ENCODE measurements at regions of chr9 and their contacts with region 1.

Region 1: DNA sequence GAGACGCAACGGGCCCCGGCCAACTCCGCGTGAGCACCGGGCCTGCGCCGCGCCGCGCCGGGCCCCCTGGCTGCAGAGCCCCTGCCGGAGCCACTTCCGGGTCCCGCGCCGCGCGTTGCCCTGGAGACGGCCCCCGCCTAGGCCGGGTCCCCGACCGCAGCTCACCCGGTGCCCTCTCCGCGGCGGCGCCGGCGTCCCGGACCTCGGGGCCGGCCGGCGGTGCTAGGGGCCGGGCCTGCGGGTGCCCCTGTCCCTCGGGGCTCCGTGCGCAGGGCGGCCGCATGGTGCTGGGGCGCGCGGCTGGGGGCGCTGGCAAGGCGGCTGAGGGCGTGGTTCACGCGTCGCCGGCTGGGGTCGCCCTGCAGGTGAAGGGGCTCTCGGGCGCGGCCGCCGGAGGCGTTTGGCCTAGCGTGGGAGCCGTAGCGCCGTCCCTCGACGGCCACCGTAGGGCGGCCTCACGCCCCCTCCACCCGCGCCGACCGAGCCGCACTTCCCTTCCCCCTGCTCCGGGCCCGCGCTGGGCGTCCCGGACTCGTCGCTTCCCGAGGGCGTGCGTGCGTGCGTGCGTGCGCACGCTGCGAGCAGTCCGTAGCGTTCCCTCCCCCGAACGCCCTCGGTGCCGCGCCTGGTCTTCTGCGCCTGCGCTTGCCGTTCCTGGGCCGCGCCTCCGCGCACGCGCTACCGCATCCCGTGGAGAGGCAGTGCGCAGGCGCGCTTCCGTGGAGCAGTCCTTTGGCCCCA is at the start of gene TMEM250:
- DNase-seq: peak; percentile 96
- H3K4me3 Mint-ChIP-seq: peak within 1 kb of the TSS; percentile 73
- H3K27ac Mint-ChIP-seq: peak within 1 kb of the TSS; percentile 51
- H3K4me1 Mint-ChIP-seq: no peaks in the 10 kb centered on the region
- H3K27me3 Mint-ChIP-seq: peaks cover under 1% of the 10 kb centered on the region
- CTCF ChIP-seq: no peak
- total RNA-seq, gene TMEM250: 43.2 and 45.4 TPM in 2 replicates

Region 2: DNA sequence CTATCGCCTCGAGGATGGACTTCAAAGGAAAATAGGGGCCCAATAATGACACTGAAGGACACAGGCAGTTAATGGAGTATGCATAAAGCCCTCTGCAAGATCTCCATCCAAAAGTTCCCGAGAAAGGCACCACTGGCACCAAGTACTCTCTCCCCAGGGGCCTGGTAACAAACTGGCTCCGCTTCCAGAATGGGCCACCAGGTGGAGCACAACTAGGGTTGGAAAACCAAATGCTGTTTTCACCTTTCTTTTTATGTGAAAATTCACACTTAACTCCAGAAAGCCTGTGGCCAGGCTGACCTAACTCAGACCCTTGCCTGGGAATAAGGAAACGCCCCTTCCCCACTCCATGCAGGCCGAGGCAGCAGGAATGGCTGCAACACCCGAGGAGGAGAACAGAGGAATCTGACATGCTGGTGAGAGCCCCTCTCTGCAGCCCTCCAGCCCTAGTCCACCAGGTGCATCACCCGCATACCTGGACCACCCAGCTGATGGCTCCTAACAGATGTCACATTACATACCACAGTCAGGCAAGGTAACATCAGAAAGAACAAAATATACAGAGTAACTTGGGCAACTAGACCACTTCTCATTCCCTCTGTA is 253.9 kb before region 1 on chr9:
- CTCF ChIA-PET with region 1: no interaction called
- POLR2A ChIA-PET with region 1: interaction called, 3 read pairs
- intact Hi-C with region 1: loop called (anchors 2 kb)
- DNase-seq: peak; percentile 65
- H3K4me3 Mint-ChIP-seq: no peak overlapping the region
- H3K27ac Mint-ChIP-seq: no peak overlapping the region
- H3K4me1 Mint-ChIP-seq: no peaks in the 10 kb centered on the region
- H3K27me3 Mint-ChIP-seq: no peaks in the 10 kb centered on the region
- CTCF ChIP-seq: peak; percentile 66

Region 3: DNA sequence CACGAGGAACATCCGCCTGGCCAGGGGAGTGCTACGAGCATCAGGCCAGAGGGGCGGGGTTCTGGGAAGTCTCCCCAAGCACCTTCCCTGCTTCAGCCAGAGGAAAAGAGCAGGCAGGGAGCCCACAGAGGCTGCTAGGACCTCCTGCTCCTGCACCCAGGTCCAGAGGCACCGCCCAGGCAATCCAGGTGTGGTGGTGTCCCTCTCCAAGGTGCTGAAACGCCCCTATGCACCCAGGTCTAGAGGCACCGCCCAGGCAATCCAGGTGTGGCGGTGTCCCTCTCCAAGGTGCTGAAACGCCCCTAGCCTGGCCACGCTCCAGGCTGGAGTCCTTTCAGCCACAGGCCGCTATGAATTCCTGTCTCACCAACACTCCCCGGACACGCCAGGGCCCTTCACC is 146.6 kb before region 1 on chr9:
- CTCF ChIA-PET with region 1: interaction called, 104 read pairs
- POLR2A ChIA-PET with region 1: no interaction called
- intact Hi-C with region 1: loop called (anchors 1 kb)
- DNase-seq: peak; percentile 84
- H3K4me3 Mint-ChIP-seq: no peak overlapping the region
- H3K27ac Mint-ChIP-seq: no peak overlapping the region
- H3K4me1 Mint-ChIP-seq: peaks cover 7% of the 10 kb centered on the region
- H3K27me3 Mint-ChIP-seq: peaks cover 31% of the 10 kb centered on the region
- CTCF ChIP-seq: no peak

Region 4: DNA sequence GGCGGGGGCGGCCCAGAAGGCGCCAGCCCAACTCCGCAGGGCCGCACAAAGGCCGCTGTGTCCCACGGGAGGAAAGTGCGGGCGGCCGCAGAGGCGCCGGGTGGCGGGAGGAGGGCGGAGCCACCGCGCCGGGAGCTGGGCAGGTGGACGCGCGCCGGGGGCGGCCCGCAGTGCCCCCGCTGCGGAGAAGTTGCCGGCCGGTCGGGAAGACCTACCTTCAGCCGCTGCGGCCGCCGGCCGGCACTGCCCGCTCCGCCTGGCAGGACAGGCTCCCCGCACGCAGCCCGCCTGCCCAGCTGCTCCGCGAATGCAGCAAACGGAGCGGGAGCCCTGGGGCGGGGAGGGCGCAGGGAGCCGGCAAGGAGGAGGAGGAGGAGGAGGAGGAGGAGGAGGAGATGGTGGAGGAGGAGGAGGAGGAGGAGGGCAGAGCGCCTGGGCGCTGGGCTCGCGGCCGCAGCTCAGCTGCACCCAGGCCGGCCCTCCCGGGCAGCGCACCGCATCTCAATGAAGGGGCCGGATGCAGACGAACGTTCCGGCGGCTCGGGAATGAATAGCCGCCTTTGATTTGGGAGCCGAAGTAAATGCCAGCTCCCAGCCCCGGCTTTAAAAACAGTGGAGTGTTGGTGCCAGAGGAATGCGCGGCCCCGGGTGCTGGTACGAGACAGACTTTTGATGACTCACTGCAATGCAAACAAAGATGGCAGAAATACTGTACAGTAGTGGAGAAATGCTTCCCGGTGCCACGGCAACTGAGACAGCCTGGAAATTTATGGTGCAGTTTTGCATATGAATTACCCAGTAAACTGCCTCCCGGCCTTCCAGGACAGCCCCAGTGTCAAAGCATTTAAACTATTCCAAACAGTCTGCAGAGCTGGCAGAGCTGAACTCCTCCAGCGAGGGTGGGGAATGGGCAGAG is 66.7 kb before region 1 on chr9:
- CTCF ChIA-PET with region 1: interaction called, 5 read pairs
- POLR2A ChIA-PET with region 1: interaction called, 12 read pairs
- intact Hi-C with region 1: no loop called
- DNase-seq: peak; percentile 97
- H3K4me3 Mint-ChIP-seq: peak overlapping the region; percentile 64
- H3K27ac Mint-ChIP-seq: peak overlapping the region; percentile 35
- H3K4me1 Mint-ChIP-seq: peaks cover 6% of the 10 kb centered on the region
- H3K27me3 Mint-ChIP-seq: no peaks in the 10 kb centered on the region
- CTCF ChIP-seq: no peak

Region 5: GRCh38 chr9:136093995-136094881 is 24.3 kb before region 1 on chr9:
- CTCF ChIA-PET with region 1: interaction called, 18 read pairs
- POLR2A ChIA-PET with region 1: interaction called, 28 read pairs
- intact Hi-C with region 1: loop called (anchors 1 kb)
- DNase-seq: peak; percentile 65
- H3K4me3 Mint-ChIP-seq: peak overlapping the region; percentile 77
- H3K27ac Mint-ChIP-seq: peak overlapping the region; percentile 67
- H3K4me1 Mint-ChIP-seq: peaks cover 17% of the 10 kb centered on the region
- H3K27me3 Mint-ChIP-seq: no peaks in the 10 kb centered on the region
- CTCF ChIP-seq: no peak

Region 6: GRCh38 chr9:136145580-136145979 is 27.1 kb after region 1 on chr9:
- CTCF ChIA-PET with region 1: no interaction called
- POLR2A ChIA-PET with region 1: no interaction called
- intact Hi-C with region 1: no loop called
- DNase-seq: no peak
- H3K4me3 Mint-ChIP-seq: no peak overlapping the region
- H3K27ac Mint-ChIP-seq: no peak overlapping the region
- H3K4me1 Mint-ChIP-seq: no peaks in the 10 kb centered on the region
- H3K27me3 Mint-ChIP-seq: no peaks in the 10 kb centered on the region
- CTCF ChIP-seq: no peak

Measured in MCF 10A (cell line).